Ovary (tissue), 10 donors: ENCODE measurements at regions of chr2 and their contacts with region 1.

Region 1: DNA sequence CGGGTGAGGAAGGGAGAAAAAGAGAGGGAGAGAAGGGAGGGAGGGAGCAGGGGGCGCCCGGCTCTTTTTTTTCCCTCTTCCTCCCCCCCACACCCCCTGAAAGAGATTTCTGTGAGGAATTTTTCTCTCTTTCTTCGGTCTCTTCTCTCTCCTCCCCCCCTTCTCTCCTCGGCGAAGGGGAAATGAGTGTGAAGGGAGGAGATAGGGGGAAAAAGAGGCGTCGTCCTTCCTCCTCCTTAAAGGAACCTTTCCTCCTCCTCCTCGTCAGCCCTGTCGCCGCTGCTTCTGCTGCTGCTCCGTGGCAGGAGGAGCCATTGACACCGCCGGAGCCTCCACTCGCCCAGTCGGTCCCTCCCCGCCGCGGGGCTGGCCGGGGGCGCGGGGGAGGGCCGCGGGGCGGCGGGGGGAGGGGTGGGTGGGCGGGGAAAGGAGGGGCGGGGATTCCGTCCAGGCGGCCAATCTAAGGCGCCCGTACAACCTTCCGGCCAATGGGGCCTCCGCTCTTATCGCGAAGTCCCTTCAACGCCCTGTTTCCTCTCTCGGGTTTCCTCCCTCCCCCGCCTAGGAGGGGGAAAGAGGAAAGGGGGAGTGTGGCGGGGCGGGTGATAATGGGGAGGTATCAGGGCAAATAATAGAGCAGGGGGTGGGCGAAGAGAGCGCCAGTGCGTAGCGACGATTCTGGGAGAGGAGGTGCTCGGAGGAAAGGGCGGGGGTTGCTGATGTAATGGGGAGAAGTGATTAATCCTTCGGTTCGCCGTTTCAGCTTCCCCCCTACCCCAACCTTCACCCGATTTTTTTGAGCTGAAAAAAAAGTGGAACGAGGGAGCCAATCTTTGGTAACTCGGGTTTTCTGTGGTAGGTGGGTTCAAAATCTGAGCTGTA is at the start of gene FBXO11:
- DNase-seq: peak; percentile 95 to 98 (median 96)
- H3K4me3 ChIP-seq: peak within 1 kb of the TSS; percentile 93
- H3K27ac ChIP-seq: peak within 1 kb of the TSS; percentile 95 to 98
- H3K4me1 ChIP-seq: peaks cover 4% of the 10 kb centered on the region
- H3K27me3 ChIP-seq: no peaks in the 10 kb centered on the region
- CTCF ChIP-seq: peak; percentile 52 to 61 (median 60)
- EP300 ChIP-seq: no peak
- POLR2A ChIP-seq: peak; percentile 79
- total RNA-seq, gene FBXO11: 63.3 to 85.9 (median 75.9) TPM

Region 2: GRCh38 chr2:47782671-47783485 is 123.5 kb before region 1 on chr2 and contains the start of gene MSH6:
- intact Hi-C with region 1: loop called in 3 of 4 experiments (anchors 2 to 5 kb)
- DNase-seq: peak; percentile 87 to 94 (median 92)
- H3K4me3 ChIP-seq: peak within 1 kb of the TSS; percentile 74
- H3K27ac ChIP-seq: peak within 1 kb of the TSS; percentile 92 to 93
- H3K4me1 ChIP-seq: peaks cover 8% of the 10 kb centered on the region
- H3K27me3 ChIP-seq: no peaks in the 10 kb centered on the region
- CTCF ChIP-seq: no peak
- EP300 ChIP-seq: no peak
- POLR2A ChIP-seq: peak; percentile 94
- total RNA-seq, gene MSH6: 61.9 to 134 (median 87.0) TPM

Region 3: GRCh38 chr2:47850198-47850597 is 56.2 kb before region 1 on chr2:
- intact Hi-C with region 1: loop called in 1 of 4 experiments (anchors 10 kb)
- DNase-seq: no peak
- H3K4me3 ChIP-seq: no peak overlapping the region
- H3K27ac ChIP-seq: no peak overlapping the region
- H3K4me1 ChIP-seq: peaks cover 7% of the 10 kb centered on the region
- H3K27me3 ChIP-seq: no peaks in the 10 kb centered on the region
- CTCF ChIP-seq: no peak
- EP300 ChIP-seq: no peak
- POLR2A ChIP-seq: no peak